GM23248 (cell line): ENCODE measurements at regions of chr2 and their contacts with region 1.

Region 1: DNA sequence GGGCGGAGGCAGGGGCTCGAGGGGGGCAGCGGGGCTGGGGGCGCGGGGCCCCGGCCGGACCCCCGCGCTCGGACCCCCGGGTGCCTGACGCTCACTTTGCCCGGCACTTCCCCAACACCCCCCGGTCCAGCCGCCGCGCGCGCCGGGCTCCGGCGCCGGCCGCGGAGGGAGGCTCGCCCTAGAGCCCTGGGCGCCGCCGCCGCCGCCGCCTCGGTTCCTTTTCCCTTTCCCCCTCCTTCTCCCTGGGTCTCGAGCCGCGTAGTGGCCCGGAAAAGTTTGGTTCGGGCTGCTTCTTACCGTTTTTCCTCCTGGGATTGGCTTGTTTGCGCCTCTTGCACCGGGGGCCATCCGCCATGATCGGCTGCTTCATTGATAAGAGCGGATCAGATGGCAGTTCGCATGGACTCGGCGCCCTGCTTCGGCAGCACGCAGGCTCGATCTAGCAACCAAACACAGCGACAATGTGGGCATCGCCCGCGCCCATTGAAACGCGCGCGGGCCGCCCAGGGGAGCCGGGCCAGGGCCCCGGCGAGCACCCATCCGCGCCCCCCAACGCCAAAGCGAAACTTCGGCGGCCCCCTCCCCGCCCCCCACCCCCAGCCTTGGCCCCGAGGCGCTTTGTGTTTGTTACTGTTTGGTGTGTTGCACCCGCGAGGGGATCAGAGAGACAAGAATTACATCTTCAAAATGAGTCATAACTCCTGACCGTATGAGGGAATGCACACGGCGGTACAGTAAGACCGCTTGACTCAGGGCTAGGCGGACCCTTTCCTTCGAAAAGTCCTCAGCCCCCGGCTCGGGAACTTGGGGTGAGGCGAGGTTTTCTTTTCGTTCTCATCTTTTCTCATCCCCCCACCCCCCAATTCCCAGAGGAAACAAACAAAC is 2.7 kb downstream of the ZEB2 start:
- DNase-seq: peak; percentile 98
- H3K4me3 ChIP-seq: peak overlapping the region; percentile 87
- H3K27ac ChIP-seq: peak overlapping the region; percentile 99
- H3K4me1 ChIP-seq: peaks cover 43% of the 10 kb centered on the region
- H3K27me3 ChIP-seq: no peaks in the 10 kb centered on the region

Region 2: GRCh38 chr2:142965443-142965842 is 1551.8 kb before region 1 on chr2:
- in situ Hi-C with region 1: no loop called
- DNase-seq: peak; percentile 65
- H3K4me3 ChIP-seq: no peak overlapping the region
- H3K27ac ChIP-seq: no peak overlapping the region
- H3K4me1 ChIP-seq: peaks cover 5% of the 10 kb centered on the region; the same call in 1 of the 2 replicates
- H3K27me3 ChIP-seq: no peaks in the 10 kb centered on the region

Region 3: GRCh38 chr2:143939626-143940330 is 577.4 kb before region 1 on chr2:
- in situ Hi-C with region 1: loop called (anchors 10 kb)
- DNase-seq: peak; percentile 52
- H3K4me3 ChIP-seq: 0 out of 2 replicates have a peak overlapping the region, but pooled peaks have one; percentile 10
- H3K27ac ChIP-seq: no peak overlapping the region
- H3K4me1 ChIP-seq: peaks cover 12% of the 10 kb centered on the region
- H3K27me3 ChIP-seq: no peaks in the 10 kb centered on the region

Region 4: DNA sequence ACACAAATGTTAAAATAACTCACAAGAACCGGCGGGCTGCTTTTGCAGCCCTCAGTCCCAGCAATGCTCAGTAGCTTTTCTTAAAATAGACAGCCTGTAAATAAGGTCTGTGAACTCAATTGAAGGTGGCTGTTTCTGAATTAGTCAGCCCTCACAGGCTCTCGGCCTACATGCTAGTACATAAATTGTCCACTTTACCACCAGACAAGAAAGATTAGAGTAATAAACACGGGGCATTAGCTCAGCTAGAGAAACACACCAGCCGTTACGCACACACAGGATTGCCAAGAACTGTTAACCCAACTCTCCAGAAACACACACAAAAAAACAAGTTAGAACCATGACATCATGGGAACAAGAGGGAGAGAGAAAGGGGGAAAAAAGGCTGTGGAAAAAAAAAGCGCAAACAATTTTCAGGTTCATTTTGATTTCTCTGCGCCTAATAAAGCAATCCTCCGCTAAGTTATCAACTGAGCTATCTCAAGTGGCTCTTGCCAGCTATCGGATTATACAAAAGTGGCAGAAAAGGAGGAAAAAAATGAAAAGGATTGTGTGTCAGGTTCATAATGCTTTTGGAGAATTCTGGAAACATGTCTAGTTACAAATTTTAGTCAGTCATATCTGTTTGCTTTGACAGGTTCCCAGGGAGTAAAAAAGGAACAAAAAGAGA is 86.4 kb before region 1 on chr2:
- in situ Hi-C with region 1: no loop called
- DNase-seq: peak; percentile 61
- H3K4me3 ChIP-seq: no peak overlapping the region
- H3K27ac ChIP-seq: peak overlapping the region; percentile 39
- H3K4me1 ChIP-seq: peaks cover 28% of the 10 kb centered on the region
- H3K27me3 ChIP-seq: no peaks in the 10 kb centered on the region

Region 5: DNA sequence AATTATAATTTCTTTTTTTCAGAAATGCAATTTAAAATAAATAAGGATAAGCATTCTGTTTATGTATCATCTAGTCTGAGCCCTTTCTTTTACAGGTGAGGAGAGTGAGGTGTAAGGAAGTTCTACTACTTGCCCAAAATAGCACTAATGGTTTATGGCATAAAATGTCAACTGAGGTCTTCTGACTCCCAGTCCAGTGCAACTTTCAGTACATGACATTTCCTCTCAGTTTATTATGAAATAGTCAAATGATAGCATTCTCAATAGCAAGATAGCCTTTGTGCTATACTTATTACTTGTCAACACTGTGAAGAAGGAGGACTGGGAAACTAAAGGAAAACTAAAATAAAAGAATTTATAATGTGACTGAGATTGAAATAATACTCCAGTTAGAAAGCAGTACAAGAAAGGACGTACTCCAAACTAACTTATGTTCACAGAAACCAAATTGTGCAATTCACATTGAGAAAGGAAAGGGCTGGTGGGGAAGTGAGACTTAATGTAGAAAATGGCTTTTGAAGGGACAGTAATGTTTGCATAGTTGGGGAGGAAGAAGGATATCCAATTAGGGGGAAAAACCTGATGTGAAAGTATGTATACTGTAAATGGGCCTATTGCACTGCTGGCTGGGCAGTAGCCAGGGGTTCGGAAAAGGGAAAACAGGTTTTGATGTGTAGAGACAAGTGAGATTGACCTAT is 169.4 kb after region 1 on chr2:
- in situ Hi-C with region 1: no loop called
- DNase-seq: no peak
- H3K4me3 ChIP-seq: no peak overlapping the region
- H3K27ac ChIP-seq: no peak overlapping the region
- H3K4me1 ChIP-seq: no peaks in the 10 kb centered on the region
- H3K27me3 ChIP-seq: no peaks in the 10 kb centered on the region

Region 6: DNA sequence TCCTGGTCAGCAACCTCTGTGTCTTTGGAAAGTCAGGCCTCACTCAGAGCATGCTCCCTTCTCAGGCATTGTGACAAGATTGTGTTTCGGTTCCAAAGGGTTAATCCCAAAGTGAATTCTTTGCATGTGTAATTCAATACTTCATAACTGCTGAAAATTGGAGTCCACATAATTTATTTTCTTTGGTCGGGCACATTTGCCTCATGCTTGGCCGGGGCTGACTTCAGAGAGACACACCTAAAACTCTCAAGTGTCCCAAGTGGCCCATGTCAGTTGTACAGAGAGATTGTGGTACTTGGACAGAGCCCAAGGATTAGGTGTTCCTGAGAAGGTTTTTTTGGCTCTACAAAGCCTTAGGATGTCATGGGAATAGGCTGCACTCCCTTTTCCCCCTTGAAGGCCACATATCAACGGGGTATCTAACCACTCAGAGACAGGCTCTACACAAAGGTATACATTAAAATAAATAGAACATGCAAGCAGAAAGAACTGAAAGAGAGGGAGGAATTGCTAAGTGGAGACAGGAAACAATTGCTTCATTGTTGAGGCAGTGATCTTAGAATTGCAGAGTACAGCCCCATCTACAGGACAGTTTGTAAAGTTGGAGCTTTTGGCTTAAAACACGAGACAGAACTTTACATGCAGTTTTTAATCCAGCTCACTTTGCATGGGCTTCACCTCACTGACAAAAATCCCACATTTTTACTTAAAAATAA is 1235.0 kb after region 1 on chr2:
- in situ Hi-C with region 1: loop called (anchors 10 kb)
- DNase-seq: peak; percentile 86
- H3K4me3 ChIP-seq: peak overlapping the region; percentile 48
- H3K27ac ChIP-seq: peak overlapping the region; percentile 43
- H3K4me1 ChIP-seq: peaks cover 22% of the 10 kb centered on the region
- H3K27me3 ChIP-seq: no peaks in the 10 kb centered on the region